H1 (cell line): ENCODE measurements at regions of chr14 and their contacts with region 1.

Region 1: DNA sequence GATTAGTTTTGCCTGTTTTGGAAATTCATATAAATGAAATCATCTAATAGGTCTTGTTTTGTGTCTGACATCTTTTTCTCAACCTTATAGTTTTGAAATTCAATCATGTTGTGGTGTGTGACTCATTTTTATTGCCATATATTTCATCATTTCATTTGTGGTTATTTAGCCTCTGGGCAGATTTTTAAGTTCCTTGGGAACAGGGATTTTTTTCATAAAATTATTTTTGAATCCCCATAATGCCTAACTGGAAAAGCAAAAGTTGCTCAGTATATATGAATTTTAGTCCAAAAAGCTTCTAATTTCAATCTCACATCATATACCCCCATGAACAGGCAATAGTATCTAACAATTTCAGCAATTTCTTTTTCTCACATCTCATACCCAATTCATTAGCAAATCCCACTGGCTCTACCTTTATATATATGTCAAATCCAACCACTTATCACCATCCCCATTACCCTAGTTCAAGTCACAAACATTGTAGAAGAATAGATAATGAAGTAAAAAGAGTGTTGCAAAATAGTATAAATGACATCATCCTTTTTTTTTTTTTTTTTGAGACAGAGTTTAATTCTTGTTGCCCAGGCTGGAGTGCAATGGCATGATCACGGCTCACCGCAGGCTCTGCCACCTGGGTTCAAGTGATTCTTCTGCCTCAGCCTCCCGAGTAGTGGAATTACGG is 2.6 kb upstream of the OR6J1 start:
- DNase-seq: no peak
- H3K4me3 ChIP-seq: no peak overlapping the region
- H3K27ac ChIP-seq: no peak overlapping the region
- H3K4me1 ChIP-seq: no peaks in the 10 kb centered on the region
- H3K27me3 ChIP-seq: no peaks in the 10 kb centered on the region
- CTCF ChIP-seq: no peak
- EP300 ChIP-seq: no peak
- POLR2A ChIP-seq: no peak
- RAD21 ChIP-seq: no peak

Region 2: GRCh38 chr14:22658946-22659345 is 12.2 kb after region 1 on chr14:
- CTCF ChIA-PET with region 1: interaction called, 13 read pairs
- POLR2A ChIA-PET with region 1: no interaction called
- DNase-seq: no peak
- H3K4me3 ChIP-seq: no peak overlapping the region
- H3K27ac ChIP-seq: no peak overlapping the region
- H3K4me1 ChIP-seq: no peaks in the 10 kb centered on the region
- H3K27me3 ChIP-seq: 0 out of 7 replicates have a peak, but pooled peaks cover 0 to 2% (median 0%) of the 10 kb centered on the region in 4 experiments
- CTCF ChIP-seq: no peak
- EP300 ChIP-seq: no peak
- POLR2A ChIP-seq: no peak
- RAD21 ChIP-seq: no peak